ENCODE measurements at regions of chr12 and their contacts with region 1.

Region 1: DNA sequence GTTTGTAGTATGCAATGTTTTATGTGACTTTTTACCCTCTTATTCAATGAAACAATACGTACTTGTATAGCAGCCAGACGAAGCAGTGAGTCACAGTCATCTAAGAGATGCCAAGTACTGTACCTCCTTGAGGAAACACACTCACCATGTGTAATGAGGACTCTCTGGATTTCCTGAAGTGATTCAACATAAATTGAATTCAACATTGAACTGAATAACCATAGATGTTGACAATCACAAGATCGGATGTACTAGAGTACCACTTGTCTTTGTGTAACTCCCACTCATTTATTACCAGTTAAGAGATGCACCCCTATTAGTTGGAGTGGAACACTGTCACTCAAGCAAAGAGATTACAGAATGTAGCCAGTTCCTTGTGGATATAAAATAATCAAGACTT is 175.2 kb upstream of the HMGA2 start:
- DNase-seq: no peak
- H3K4me3 ChIP-seq: no peak overlapping the region
- H3K4me3 Mint-ChIP-seq: no peak overlapping the region
- H3K27ac Mint-ChIP-seq: no peak overlapping the region
- H3K4me1 ChIP-seq: no peaks in the 10 kb centered on the region
- H3K4me1 Mint-ChIP-seq: no peaks in the 10 kb centered on the region
- H3K27me3 ChIP-seq: no peaks in the 10 kb centered on the region
- H3K27me3 Mint-ChIP-seq: no peaks in the 10 kb centered on the region
- CTCF ChIP-seq: no peak

Region 2: GRCh38 chr12:65631621-65632111 is 17.5 kb before region 1 on chr12:
- CTCF ChIA-PET with region 1: no interaction called
- POLR2A ChIA-PET with region 1: no interaction called
- intact Hi-C with region 1: loop called (anchors 1 kb)
- DNase-seq: peak; percentile 34 to 41
- H3K4me3 ChIP-seq: no peak overlapping the region
- H3K4me3 Mint-ChIP-seq: no peak overlapping the region
- H3K27ac Mint-ChIP-seq: no peak overlapping the region
- H3K4me1 ChIP-seq: peaks cover 37% of the 10 kb centered on the region
- H3K4me1 Mint-ChIP-seq: peaks cover 51% of the 10 kb centered on the region
- H3K27me3 ChIP-seq: no peaks in the 10 kb centered on the region
- H3K27me3 Mint-ChIP-seq: no peaks in the 10 kb centered on the region
- CTCF ChIP-seq: no peak

Region 3: GRCh38 chr12:65666876-65667275 is 17.8 kb after region 1 on chr12:
- CTCF ChIA-PET with region 1: interaction called, 14 read pairs
- POLR2A ChIA-PET with region 1: no interaction called
- intact Hi-C with region 1: no loop called
- DNase-seq: no peak
- H3K4me3 ChIP-seq: no peak overlapping the region
- H3K4me3 Mint-ChIP-seq: no peak overlapping the region
- H3K27ac Mint-ChIP-seq: no peak overlapping the region
- H3K4me1 ChIP-seq: no peaks in the 10 kb centered on the region
- H3K4me1 Mint-ChIP-seq: no peaks in the 10 kb centered on the region
- H3K27me3 ChIP-seq: no peaks in the 10 kb centered on the region
- H3K27me3 Mint-ChIP-seq: no peaks in the 10 kb centered on the region
- CTCF ChIP-seq: no peak